Activated B cell treated with CpG ODN at 0.5 μM for 24 hours (primary cell): ENCODE measurements at regions of chr6 and their contacts with region 1.

Region 1: DNA sequence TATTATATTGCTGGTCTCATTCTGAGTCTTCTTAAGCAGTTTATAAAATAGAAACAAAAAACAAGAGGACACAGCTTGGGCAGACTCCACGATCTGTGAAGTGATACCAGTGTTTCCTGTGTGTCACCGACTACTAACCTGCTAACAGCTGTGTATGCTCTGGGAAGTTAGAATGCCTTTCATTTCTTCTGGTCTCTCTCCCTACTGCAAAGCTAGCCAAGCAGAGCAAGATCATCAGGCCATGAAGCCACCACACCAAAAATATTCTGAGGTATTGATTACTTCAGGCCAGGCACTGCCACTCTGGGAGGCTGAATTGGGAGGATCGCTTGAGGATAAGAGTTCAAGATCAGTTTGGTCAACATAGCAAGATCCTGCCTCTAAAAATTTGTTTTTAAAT is 46.9 kb upstream of the SMIM29 start:
- DNase-seq: no peak
- ATAC-seq: peak; percentile 90
- H3K4me3 Mint-ChIP-seq: peak overlapping the region; percentile 52
- H3K27ac Mint-ChIP-seq: peak overlapping the region; percentile 94
- H3K4me1 Mint-ChIP-seq: peaks cover 66% of the 10 kb centered on the region
- H3K27me3 Mint-ChIP-seq: no peaks in the 10 kb centered on the region
- CTCF ChIP-seq: no peak

Region 2: DNA sequence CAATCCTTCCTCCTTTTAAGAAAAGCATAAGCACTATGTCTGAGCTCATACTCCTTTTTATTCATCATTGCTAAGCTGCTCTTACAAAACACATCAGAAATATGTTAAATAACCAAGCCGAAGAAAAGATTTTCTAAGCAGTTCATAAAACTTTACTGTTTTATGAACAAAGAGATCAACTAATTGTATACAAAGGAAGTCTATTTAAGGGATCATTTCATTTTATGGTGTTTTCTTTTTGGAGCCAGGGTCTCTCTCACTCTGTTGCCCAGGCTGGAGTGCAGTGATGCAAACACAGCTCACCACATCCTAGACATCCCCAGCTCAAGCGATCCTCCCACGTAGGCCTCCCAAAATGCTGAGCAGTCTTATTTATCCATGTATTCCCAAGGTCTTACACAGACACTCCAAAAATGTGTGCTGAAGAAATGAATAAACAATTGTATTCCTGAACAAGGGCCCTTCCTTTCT is 87.5 kb after region 1 on chr6:
- CTCF ChIA-PET with region 1: no interaction called
- POLR2A ChIA-PET with region 1: interaction called, 11 read pairs
- intact Hi-C with region 1: no loop called
- DNase-seq: no peak
- ATAC-seq: no peak
- H3K4me3 Mint-ChIP-seq: no peak overlapping the region
- H3K27ac Mint-ChIP-seq: peak overlapping the region; percentile 65
- H3K4me1 Mint-ChIP-seq: peaks cover 55% of the 10 kb centered on the region
- H3K27me3 Mint-ChIP-seq: no peaks in the 10 kb centered on the region
- CTCF ChIP-seq: no peak